Right lobe of liver (tissue), 6 donors: ENCODE measurements at regions of chr6 and their contacts with region 1.

Region 1: GRCh38 chr6:73129653-73130443 is 95.4 kb downstream of the KHDC1L start:
- DNase-seq: peak; percentile 75 to 79 (median 76)
- ATAC-seq: peak; percentile 93 to 97 (median 95)
- H3K4me3 ChIP-seq: no peak overlapping the region
- H3K27ac ChIP-seq: no peak overlapping the region
- H3K4me1 ChIP-seq: no peaks in the 10 kb centered on the region
- H3K27me3 ChIP-seq: no peaks in the 10 kb centered on the region
- CTCF ChIP-seq: peak; percentile 68 to 92 (median 92)
- POLR2A ChIP-seq: no peak

Region 2: GRCh38 chr6:72622094-72622940 is 507.5 kb before region 1 on chr6:
- intact Hi-C with region 1: loop called in 1 of 2 experiments (anchors 10 kb)
- DNase-seq: peak in 1 of 3 donors; percentile 36
- ATAC-seq: peak; percentile 13 to 43 (median 36)
- H3K4me3 ChIP-seq: peak overlapping the region; percentile 14 to 40 (median 15)
- H3K27ac ChIP-seq: no peak overlapping the region
- H3K4me1 ChIP-seq: peaks cover 0 to 24% (median 0%) of the 10 kb centered on the region in 4 donors
- H3K27me3 ChIP-seq: peaks cover 0 to 15% of the 10 kb centered on the region in 2 donors
- CTCF ChIP-seq: no peak
- POLR2A ChIP-seq: no peak